ENCODE measurements at regions of chr1 and their contacts with region 1.

Region 1: DNA sequence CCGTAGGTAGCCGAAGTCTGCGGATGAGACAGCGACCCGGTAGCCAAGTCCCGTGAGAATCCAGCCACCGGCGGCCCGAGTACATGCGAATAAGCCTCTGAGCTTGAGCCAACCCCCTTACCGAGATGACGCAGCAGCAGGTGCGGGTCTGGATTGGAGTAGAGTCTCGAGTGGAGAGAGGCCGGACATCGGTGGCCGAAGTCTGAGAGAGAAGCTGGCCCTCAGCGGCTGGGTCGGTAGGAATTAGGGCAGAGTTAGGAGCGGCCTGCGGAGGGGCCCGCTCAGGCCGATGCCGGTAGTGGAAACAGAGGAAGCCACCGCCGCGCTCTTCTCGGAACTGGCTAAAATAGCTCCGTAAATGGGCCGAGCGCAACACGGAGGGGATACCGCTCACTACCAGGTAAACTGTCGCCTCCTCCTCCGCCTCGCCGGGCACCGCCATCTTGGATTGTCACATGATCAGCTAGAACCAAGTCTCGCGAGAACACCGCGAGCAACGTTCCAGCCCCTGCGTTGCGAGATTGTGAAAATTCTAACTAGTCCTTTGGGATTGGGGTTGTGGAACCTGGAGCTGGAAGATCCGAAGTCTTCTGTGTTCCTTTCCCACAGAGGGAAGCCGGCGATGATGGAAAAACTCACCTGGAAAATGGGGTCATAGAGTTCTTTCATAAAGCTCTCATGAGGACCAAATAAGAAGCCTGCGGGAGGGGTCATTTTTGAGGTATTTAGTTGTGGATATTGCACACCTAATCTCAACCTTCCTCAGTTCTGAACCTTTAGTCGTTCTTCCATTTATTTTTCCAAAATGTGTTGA is at the start of gene GPATCH3:
- DNase-seq: peak; percentile 94
- H3K4me3 Mint-ChIP-seq: peak within 1 kb of the TSS; percentile 90
- H3K27ac Mint-ChIP-seq: peak within 1 kb of the TSS; percentile 98
- H3K4me1 Mint-ChIP-seq: peaks cover 15% of the 10 kb centered on the region
- H3K27me3 Mint-ChIP-seq: no peaks in the 10 kb centered on the region
- CTCF ChIP-seq: no peak
- total RNA-seq, gene GPATCH3: 9.9 and 14.1 TPM in 2 replicates

Region 2: DNA sequence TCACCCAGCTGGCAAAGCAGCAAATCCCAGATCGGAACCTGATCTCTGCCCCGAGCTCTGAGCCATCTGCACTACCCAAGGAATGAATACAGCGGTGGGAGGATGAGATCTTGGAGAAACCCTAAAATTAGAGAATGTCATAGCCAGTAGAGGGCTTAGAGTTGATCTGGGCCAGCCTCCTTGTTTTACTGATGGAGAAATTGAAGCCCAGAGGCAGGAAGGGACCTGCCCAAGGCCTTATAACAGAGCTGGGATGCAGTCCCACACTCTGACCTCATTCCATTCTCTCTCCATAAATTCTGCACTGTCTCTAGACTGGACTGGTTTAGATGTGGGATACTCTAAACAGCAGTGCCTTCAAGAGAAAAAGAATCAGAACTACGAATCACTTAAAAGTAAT is 42.0 kb before region 1 on chr1:
- CTCF ChIA-PET with region 1: interaction called, 5 read pairs
- POLR2A ChIA-PET with region 1: interaction called, 15 read pairs
- intact Hi-C with region 1: no loop called
- DNase-seq: peak; percentile 54
- H3K4me3 Mint-ChIP-seq: no peak overlapping the region
- H3K27ac Mint-ChIP-seq: peak overlapping the region; percentile 81
- H3K4me1 Mint-ChIP-seq: peaks cover 38% of the 10 kb centered on the region
- H3K27me3 Mint-ChIP-seq: no peaks in the 10 kb centered on the region
- CTCF ChIP-seq: no peak

Region 3: DNA sequence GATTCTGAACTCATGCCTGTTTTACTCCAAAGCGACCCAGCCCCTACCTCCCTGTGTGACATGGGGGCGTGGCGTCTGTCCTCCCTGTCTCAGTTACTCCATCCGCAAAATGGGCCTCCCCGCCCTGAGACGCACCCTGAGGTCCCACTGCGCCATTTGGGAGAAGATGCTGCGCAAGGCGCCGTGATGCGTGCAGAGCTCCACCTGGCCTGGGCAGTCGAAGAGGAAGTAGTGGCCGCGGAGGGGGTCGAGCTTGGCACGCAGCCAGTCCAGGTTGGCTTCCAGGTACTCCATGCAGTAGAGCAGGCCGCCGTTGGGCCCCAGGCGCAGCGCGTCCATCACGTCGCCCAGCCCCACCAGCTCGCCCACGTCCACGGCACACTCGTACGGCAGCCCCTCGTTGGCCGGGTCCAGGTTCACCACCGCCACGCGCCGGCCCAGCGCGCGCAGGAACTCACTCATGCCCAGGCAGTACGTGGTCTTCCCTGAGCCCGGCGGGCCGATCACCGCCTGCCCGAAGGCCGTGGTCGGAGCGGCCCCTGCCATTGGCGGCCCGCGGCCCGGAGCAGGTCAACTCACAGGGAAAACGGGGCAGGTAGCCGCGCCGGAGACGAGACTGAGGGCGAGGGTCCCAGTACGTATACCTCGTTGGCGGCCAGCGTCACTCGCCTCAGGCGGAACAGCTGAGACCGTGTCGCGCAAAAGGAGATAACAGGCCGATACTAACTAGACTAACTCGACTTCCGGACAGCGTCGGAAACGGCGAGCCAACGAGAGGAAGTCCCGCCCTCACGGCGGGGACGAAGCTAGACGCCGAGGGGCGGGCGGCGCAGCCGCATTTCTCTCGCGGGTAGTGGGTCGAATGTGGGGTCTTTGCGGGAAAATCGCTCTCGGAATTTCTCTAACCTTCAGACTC is 10.4 kb before region 1 on chr1 and contains the start of gene GPN2:
- CTCF ChIA-PET with region 1: interaction called, 8 read pairs
- POLR2A ChIA-PET with region 1: interaction called, 103 read pairs
- intact Hi-C with region 1: no loop called
- DNase-seq: peak; percentile 75
- H3K4me3 Mint-ChIP-seq: peak within 1 kb of the TSS; percentile 91
- H3K27ac Mint-ChIP-seq: peak within 1 kb of the TSS; percentile 93
- H3K4me1 Mint-ChIP-seq: peaks cover 23% of the 10 kb centered on the region
- H3K27me3 Mint-ChIP-seq: no peaks in the 10 kb centered on the region
- CTCF ChIP-seq: no peak
- total RNA-seq, gene GPN2: 38.9 and 39.7 TPM in 2 replicates

Region 4: DNA sequence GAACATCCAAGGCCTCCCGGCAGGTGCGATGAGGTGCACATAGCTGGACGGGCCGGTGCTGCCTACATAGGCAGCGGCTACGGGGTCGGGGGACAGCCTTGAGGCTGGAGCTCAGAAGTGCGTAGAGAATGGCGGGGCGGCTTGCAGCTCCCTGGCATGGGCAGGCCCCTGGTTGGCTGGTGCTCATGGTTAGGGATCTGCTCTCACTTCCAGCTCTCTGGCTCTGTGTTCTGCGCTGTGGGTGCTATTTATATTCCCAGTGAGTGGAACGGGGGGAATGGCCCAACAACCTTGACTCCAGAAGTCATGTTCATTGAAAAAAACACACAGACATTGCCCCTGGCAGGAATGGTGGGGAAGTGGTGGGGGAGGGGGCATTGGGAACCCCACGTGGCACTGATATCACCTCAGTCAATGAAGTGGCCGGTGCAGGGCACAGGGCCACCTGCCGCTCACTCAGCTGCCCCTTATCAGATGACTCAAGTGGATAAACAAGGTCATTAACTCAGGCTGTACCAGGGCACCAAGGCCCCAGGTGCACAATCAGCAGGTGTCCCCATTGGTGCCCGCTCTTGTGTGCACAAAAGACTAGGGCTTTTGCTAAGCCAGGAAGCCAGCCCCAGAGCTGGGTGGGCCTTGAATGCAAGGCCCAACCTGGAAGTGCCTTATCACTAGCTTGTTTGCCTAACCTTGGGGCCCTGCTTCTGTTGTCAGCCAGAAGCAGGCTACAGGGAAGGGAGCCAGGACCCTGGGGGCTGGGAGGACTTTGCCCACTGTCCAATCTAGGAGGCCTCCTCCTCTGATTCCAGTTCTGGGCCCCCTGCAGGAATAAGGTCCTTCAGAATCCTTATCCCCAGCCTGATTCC is 13.8 kb after region 1 on chr1 and contains the start of gene NR0B2:
- CTCF ChIA-PET with region 1: no interaction called
- POLR2A ChIA-PET with region 1: interaction called, 12 read pairs
- intact Hi-C with region 1: no loop called
- DNase-seq: no peak
- H3K4me3 Mint-ChIP-seq: no peak within 1 kb of the TSS
- H3K27ac Mint-ChIP-seq: no peak within 1 kb of the TSS
- H3K4me1 Mint-ChIP-seq: no peaks in the 10 kb centered on the region
- H3K27me3 Mint-ChIP-seq: no peaks in the 10 kb centered on the region
- CTCF ChIP-seq: no peak
- total RNA-seq, gene NR0B2: not detected in 2 replicates

Region 5: DNA sequence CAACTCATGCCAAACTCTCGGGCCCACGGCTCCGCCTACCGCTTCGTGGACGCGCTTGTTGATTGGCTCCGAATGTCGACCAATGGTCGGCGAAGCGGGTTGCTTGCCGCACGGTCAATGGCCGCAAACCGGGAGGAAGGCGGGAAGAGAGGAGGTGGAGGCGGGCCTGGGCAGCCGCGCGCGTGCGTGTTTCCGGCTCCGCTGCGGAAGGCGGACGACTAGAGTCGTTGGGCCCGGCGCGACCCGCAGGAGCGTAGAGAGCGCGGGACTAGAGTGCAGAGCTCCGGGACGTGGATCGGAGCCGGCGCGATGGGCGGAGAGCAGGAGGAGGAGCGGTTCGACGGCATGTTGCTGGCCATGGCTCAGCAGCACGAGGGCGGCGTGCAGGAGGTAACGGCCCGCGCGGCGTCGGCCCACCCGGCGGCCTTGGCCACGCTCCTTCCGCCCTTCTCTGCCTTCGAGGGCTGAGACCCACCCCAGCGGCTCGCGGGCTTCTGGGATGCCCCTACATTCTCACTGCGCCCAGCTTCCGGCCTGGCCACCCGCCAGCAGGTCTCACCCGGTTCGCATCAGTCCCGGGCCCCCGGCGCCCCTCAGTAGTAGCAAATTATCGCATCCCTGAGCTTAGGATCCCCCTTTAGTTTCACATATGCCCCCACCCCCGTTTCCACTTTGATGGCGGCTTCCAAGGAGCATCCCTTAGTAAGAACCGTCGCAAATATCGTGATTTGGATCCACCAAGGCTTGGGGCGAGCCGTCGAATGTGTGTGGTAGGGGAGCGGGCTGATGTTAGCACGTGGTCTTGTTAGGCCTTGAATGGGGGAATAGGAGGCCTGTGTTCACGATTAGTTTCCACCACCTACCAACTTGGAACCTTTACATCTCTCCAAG is 21.6 kb after region 1 on chr1 and contains the start of gene NUDC:
- CTCF ChIA-PET with region 1: interaction called, 4 read pairs
- POLR2A ChIA-PET with region 1: interaction called, 20 read pairs
- intact Hi-C with region 1: no loop called
- DNase-seq: peak; percentile 97
- H3K4me3 Mint-ChIP-seq: peak within 1 kb of the TSS; percentile 98
- H3K27ac Mint-ChIP-seq: peak within 1 kb of the TSS; percentile 97
- H3K4me1 Mint-ChIP-seq: peaks cover 17% of the 10 kb centered on the region
- H3K27me3 Mint-ChIP-seq: no peaks in the 10 kb centered on the region
- CTCF ChIP-seq: no peak
- total RNA-seq, gene NUDC: 96.8 and 106 TPM in 2 replicates

Region 6: DNA sequence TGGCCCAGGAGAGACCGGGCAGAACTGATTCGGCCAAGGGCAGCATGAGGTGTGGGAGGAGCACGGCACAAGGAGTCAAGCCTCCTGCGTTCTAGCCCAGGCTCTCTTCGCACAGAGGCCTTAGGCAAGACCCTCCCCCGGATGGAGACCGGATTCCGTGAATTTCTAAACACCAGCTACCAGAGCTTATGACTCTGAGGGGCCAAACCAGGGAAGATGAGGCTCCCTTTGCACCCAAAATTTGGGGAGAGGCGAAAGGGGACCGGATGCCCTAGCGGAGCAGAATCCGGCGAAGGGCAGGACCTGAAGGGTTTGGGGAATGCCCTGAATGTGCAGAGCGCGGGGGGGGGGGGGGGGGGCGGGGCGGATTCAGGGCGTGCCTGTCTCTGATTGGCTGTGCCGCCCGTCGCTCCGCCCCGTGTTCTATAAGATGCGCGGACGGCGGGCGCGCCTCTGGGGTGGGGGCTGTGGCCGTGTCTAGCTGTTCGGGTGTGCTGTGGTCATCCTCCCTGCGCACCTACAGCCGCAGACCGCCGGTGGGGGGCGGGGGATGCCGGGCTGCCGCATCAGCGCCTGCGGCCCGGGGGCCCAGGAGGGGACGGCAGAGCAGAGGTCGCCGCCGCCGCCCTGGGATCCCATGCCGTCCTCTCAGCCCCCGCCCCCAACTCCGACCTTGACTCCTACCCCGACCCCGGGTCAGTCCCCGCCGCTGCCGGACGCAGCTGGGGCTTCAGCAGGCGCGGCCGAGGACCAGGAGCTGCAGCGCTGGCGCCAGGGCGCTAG is 93.2 kb after region 1 on chr1 and contains the start of gene TRNP1:
- CTCF ChIA-PET with region 1: interaction called, 5 read pairs
- POLR2A ChIA-PET with region 1: interaction called, 25 read pairs
- intact Hi-C with region 1: no loop called
- DNase-seq: peak; percentile 81
- H3K4me3 Mint-ChIP-seq: peak within 1 kb of the TSS; percentile 80
- H3K27ac Mint-ChIP-seq: peak within 1 kb of the TSS; percentile 92
- H3K4me1 Mint-ChIP-seq: peaks cover 45% of the 10 kb centered on the region
- H3K27me3 Mint-ChIP-seq: no peaks in the 10 kb centered on the region
- CTCF ChIP-seq: no peak
- total RNA-seq, gene TRNP1: 56.3 and 59.2 TPM in 2 replicates

Measured in MCF 10A (cell line).